Psoas muscle (tissue), 8 donors: ENCODE measurements at regions of chr9 and their contacts with region 1.

Region 1: GRCh38 chr9:126275386-126276001 is 51.1 kb upstream of the MVB12B start:
- DNase-seq: no peak
- ATAC-seq: no peak
- H3K4me3 ChIP-seq: no peak overlapping the region
- H3K27ac ChIP-seq: no peak overlapping the region
- H3K4me1 ChIP-seq: no peaks in the 10 kb centered on the region
- H3K27me3 ChIP-seq: no peaks in the 10 kb centered on the region
- CTCF ChIP-seq: no peak

Region 2: DNA sequence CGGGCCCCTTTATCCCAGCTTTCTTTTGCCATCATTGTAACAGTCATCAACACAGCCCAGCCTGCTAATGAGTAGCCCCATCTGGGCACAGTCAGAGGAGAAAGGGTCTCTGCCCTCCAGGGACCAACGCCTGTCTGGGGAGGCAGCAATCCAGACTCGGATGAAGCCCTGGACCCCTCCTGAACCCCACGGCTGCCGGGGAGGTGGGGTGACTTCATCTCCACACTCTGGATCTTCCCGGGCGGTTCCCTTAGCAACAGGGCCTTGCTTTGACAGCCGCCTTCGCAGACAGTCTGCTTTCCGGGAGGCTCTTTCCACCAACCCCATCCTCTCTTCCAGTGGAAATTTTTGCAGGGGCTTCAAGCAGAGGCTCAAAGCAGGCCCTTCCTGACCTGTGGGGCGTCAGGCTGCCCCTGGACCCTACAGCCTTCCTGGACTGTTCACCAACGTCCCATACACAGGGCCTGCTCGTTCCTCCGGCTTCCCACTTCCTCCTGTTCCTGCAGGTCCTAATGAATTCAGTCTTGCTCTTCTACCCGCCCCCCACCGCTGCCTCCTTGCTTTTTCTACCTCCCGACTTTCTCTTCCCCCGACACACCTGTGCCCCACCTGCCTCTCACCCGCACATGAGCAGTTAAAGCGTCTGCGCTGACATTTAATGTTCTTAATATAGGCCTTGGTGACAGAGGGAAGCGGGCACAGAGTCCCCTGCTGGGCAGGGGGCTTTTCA is 110.5 kb before region 1 on chr9:
- intact Hi-C with region 1: loop called in 1 of 2 experiments (anchors 10 kb)
- DNase-seq: no peak
- ATAC-seq: no peak
- H3K4me3 ChIP-seq: no peak overlapping the region
- H3K27ac ChIP-seq: no peak overlapping the region
- H3K4me1 ChIP-seq: no peaks in the 10 kb centered on the region
- H3K27me3 ChIP-seq: peaks cover 0 to 25% (median 8%) of the 10 kb centered on the region in 3 donors
- CTCF ChIP-seq: no peak

Region 3: GRCh38 chr9:126500684-126501382 is 225.3 kb after region 1 on chr9:
- intact Hi-C with region 1: no loop called
- DNase-seq: peak; percentile 75 to 86
- ATAC-seq: peak; percentile 76 to 86 (median 78)
- H3K4me3 ChIP-seq: no peak overlapping the region
- H3K27ac ChIP-seq: no peak overlapping the region
- H3K4me1 ChIP-seq: no peaks in the 10 kb centered on the region
- H3K27me3 ChIP-seq: no peaks in the 10 kb centered on the region
- CTCF ChIP-seq: peak; percentile 96